ENCODE measurements at regions of chr13 and their contacts with region 1.

Region 1: DNA sequence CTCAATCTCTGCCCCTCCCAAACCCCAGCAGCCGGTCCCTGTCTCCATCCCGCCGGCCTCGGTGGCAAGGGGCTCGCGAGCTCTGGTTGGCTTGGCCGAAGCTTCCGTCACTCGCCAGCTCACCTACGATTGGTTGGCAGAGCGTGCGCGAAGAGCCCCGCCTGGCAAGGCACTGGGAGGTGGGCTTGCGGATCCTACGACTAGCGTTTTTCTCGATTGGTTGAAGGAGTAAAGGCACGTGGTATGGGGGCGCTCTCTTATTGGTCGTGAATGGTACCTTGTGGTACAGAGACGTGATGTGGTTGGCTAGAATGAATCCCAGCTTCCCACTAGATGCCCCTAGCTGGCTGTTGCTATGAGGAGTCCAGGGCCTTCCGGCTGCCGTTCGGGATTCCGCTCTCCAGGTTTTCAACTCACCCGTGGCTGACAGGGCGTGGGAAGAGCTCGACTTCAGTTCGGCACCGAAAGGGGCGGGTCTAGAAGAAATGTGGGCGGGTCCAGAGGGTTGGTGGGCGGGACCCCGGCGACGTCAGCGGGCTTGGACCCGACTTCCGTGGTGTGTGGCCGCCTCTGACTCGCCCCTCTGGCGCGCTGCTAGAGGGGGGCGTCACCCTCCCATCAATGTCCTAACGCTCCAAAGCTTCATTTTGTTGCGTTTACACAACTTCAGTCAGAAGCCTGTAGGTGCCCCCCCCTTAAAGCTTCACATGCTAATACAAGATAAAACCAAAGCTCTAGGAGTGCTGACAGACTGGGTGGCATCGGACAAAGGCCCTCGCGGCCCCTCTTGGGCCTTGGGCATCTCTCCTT is 847 bp upstream of the RAP2A start:
- DNase-seq: peak; percentile 99
- H3K4me3 ChIP-seq: peak overlapping the region; percentile 87 to 97
- H3K27ac ChIP-seq: peak overlapping the region; percentile 100
- H3K4me1 ChIP-seq: peaks cover 0 to 15% of the 10 kb centered on the region in 2 donors
- H3K27me3 ChIP-seq: no peaks in the 10 kb centered on the region
- CTCF ChIP-seq: no peak

Region 2: GRCh38 chr13:96053011-96053703 is 1380.0 kb before region 1 on chr13 and contains the start of gene UGGT2:
- intact Hi-C with region 1: loop called (anchors 2 kb)
- DNase-seq: peak; percentile 77 to 96
- H3K4me3 ChIP-seq: peak within 1 kb of the TSS; percentile 73 to 89
- H3K27ac ChIP-seq: peak within 1 kb of the TSS; percentile 81 to 94
- H3K4me1 ChIP-seq: no peaks in the 10 kb centered on the region
- H3K27me3 ChIP-seq: no peaks in the 10 kb centered on the region
- CTCF ChIP-seq: no peak
- total RNA-seq, gene UGGT2: 26.0 TPM

Region 3: GRCh38 chr13:96892841-96893240 is 540.3 kb before region 1 on chr13:
- intact Hi-C with region 1: no loop called
- DNase-seq: no peak
- H3K4me3 ChIP-seq: no peak overlapping the region
- H3K27ac ChIP-seq: no peak overlapping the region
- H3K4me1 ChIP-seq: no peaks in the 10 kb centered on the region
- H3K27me3 ChIP-seq: no peaks in the 10 kb centered on the region
- CTCF ChIP-seq: no peak

Region 4: DNA sequence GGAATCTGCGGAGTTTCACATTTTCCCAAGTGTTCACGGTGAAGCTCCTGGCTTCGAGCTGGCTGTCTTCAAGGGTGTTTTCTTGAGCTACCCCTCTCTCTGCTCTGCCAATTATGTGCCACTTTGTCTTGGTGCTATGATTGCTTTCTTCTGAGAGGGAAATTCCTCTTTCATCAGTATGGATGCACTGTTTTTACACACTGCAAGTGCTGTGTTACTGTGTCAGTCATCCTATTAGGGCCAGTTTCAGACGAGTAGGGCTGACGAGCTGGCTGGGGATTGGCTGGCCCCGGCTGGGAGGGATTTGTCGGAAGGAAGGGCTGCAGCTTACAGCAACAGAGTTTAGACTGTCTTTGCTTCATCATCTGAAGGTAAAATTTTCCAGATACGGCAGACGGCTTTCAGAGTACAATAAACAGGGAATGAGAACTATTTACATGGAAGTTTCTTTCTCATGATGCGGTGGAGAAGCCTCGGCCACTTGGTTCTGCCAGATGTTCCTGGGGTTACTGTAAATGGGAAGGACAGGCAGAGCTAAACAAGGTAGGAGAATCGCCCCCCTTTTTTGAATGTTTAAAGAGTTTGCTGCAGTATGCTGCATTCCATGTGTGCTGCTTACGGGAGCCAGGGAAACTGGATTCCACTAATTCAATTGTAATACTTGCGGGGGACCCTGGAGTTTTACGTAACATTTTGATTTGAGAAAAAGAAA is 211.0 kb before region 1 on chr13 and contains the start of gene MBNL2:
- intact Hi-C with region 1: loop called (anchors 2 kb)
- DNase-seq: peak; percentile 75 to 93
- H3K4me3 ChIP-seq: peak within 1 kb of the TSS; percentile 72 to 78
- H3K27ac ChIP-seq: peak within 1 kb of the TSS; percentile 80 to 83
- H3K4me1 ChIP-seq: peaks cover 0 to 12% of the 10 kb centered on the region in 2 donors
- H3K27me3 ChIP-seq: no peaks in the 10 kb centered on the region
- CTCF ChIP-seq: no peak
- total RNA-seq, gene MBNL2: 38.7 TPM

Region 5: GRCh38 chr13:97726664-97727280 is 293.6 kb after region 1 on chr13:
- intact Hi-C with region 1: loop called (anchors 10 kb)
- DNase-seq: peak in 1 of 2 donors; percentile 67
- H3K4me3 ChIP-seq: no peak overlapping the region
- H3K27ac ChIP-seq: peak overlapping the region; percentile 45 to 59
- H3K4me1 ChIP-seq: peaks cover 0 to 20% of the 10 kb centered on the region in 2 donors
- H3K27me3 ChIP-seq: no peaks in the 10 kb centered on the region
- CTCF ChIP-seq: no peak

Region 6: DNA sequence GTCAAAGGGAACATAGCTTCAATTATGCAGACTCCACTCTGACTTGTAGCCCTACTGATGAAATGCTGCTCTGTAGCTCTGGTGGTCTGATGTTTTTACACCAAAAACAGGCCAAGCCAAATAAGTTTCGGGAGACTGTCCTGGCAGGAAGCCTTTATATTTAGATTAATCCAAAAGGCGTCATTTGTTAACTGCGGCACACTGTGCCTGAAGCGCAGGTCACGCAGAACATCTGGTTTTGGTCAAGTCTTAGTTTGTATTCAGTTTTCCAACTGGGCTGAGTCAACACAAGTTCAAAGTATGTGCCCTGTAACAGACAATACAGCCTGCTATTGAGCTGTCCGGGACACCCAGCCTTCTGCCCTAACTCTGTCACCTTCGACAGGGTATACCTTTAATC is 365.7 kb after region 1 on chr13:
- intact Hi-C with region 1: loop called (anchors 2 kb)
- DNase-seq: no peak
- H3K4me3 ChIP-seq: peak overlapping the region in 1 of 2 donors; percentile 6
- H3K27ac ChIP-seq: peak overlapping the region in 1 of 2 donors; percentile 21
- H3K4me1 ChIP-seq: peaks cover 0 to 4% of the 10 kb centered on the region in 2 donors
- H3K27me3 ChIP-seq: no peaks in the 10 kb centered on the region
- CTCF ChIP-seq: no peak

Region 7: GRCh38 chr13:98576963-98577822 is 1144.1 kb after region 1 on chr13 and contains the start of gene STK24:
- intact Hi-C with region 1: loop called (anchors 10 kb)
- DNase-seq: peak in 1 of 2 donors; percentile 77
- H3K4me3 ChIP-seq: peak within 1 kb of the TSS; percentile 88 to 89
- H3K27ac ChIP-seq: peak within 1 kb of the TSS; percentile 98 to 99
- H3K4me1 ChIP-seq: peaks cover 0 to 24% of the 10 kb centered on the region in 2 donors
- H3K27me3 ChIP-seq: no peaks in the 10 kb centered on the region
- CTCF ChIP-seq: no peak
- total RNA-seq, gene STK24: 35.4 TPM

Measured in ascending aorta (tissue), 2 donors.